ENCODE measurements at regions of chr12 and their contacts with region 1.

Region 1: GRCh38 chr12:80412369-80412953 is 31.6 kb upstream of the PTPRQ start:
- DNase-seq: peak in 2 of 4 donors; percentile 43 to 59
- ATAC-seq: peak; percentile 84
- H3K4me3 ChIP-seq: no peak overlapping the region
- H3K27ac ChIP-seq: no peak overlapping the region
- H3K4me1 ChIP-seq: no peaks in the 10 kb centered on the region
- H3K27me3 ChIP-seq: no peaks in the 10 kb centered on the region
- CTCF ChIP-seq: peak; percentile 43 to 86

Region 2: DNA sequence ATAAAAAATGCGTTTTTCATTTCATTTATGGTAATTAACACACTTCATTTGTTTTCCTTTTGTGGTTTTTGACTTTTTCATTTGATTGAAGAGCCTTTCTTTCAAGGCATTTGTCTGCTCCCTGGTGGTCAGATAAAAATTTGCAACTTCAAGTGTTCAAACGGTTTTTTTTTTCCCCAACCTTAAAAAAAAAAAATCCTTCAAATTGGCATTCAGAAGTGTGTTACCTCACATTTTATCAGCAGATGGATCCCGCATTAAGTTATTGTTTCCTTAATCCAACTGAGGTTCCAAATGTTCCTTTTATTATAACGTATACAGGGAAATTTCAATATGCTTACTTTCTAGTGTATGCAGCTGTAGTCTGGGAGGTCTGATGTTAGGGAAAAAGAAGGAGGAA is 351.4 kb after region 1 on chr12:
- intact Hi-C with region 1: loop called in 1 of 2 experiments (anchors 5 kb)
- DNase-seq: peak in 2 of 4 donors; percentile 41 to 54
- ATAC-seq: peak; percentile 38
- H3K4me3 ChIP-seq: no peak overlapping the region
- H3K27ac ChIP-seq: no peak overlapping the region
- H3K4me1 ChIP-seq: no peaks in the 10 kb centered on the region
- H3K27me3 ChIP-seq: no peaks in the 10 kb centered on the region
- CTCF ChIP-seq: peak in 1 of 2 donors; percentile 38

Measured in left lung (tissue), 14 donors.